ENCODE measurements at regions of chr12 and their contacts with region 1.

Region 1: GRCh38 chr12:46364777-46365580 is 7.6 kb downstream of the SLC38A2 start:
- DNase-seq: no peak
- H3K4me3 ChIP-seq: peak overlapping the region; percentile 2 to 89 (median 58)
- H3K27ac ChIP-seq: peak overlapping the region in 2 of 4 donors; percentile 22 to 95
- H3K4me1 ChIP-seq: peaks cover 59 to 96% (median 94%) of the 10 kb centered on the region in 4 donors
- H3K27me3 ChIP-seq: no peaks in the 10 kb centered on the region
- CTCF ChIP-seq: no peak
- EP300 ChIP-seq: no peak
- POLR2A ChIP-seq: no peak

Region 2: DNA sequence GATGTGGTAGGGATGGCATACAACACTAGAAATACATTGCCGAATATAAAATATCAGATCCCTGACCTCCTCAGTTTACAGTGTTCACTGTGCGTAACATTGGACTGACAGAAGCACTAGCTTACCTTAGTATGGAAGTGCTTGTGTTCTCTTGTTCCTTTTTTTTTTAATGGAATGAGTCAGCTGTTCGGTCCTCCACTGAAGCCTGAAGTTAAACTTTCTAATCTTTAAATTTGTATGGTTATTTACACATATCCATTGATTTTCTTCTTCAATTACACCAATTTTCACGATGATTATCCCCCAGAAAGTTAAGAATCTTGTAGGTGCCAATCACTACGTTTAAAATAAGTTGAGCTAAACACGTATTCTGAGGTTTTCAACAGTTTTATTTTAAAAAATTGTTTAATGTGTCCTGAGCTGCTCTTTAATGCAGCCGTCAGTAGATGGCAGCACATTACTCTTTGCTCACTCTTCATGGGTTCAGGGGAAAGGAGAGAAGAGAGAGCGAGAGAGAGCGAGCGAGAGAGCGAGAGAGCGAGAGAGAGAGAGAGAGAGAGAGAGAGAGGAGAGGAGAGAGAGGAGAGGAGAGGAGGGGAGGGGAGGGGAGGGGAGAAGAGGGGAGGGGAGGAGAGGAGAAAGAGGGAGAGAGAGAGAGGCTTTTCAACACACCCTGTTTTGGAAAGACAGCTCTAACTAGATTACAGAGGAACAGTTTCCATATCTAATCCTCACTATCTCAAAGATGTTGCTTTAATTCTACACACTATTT is 239.9 kb before region 1 on chr12:
- intact Hi-C with region 1: loop called (anchors 10 kb)
- DNase-seq: no peak
- H3K4me3 ChIP-seq: peak overlapping the region; percentile 30 to 51 (median 42)
- H3K27ac ChIP-seq: peak overlapping the region in 3 of 4 donors; percentile 25 to 42 (median 37)
- H3K4me1 ChIP-seq: peaks cover 12 to 21% (median 15%) of the 10 kb centered on the region in 4 donors
- H3K27me3 ChIP-seq: no peaks in the 10 kb centered on the region
- CTCF ChIP-seq: peak; percentile 72 to 80 (median 72)
- EP300 ChIP-seq: no peak
- POLR2A ChIP-seq: no peak

Region 3: DNA sequence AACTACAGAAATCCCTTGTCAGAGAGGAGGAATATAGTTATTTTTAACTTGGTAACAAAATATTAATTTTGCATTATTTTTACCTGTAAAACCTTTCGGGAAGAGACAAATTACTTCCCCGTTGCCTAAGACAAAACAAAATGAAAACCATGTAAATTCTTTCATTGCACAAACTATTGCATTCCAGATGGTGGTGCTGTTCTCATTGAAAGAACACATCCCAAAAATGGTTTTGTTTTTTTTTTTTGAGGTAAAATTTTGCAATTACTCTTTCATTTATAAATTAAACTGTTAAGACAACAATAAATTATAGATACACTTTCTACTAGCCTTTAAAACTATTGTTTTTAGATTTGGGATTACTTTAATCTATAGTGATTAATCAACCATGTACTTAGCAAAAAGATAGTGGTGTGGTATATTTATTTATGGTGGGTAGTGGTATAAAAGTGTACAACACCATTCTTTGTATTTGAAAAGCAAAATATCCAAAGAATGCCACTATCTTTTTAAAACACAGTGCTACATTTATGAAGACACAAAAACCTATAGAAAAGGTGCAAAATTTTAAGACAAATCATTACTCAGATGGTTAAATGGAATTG is 211.6 kb before region 1 on chr12:
- intact Hi-C with region 1: loop called (anchors 5 kb)
- DNase-seq: no peak
- H3K4me3 ChIP-seq: no peak overlapping the region
- H3K27ac ChIP-seq: peak overlapping the region in 2 of 4 donors; percentile 18 to 42
- H3K4me1 ChIP-seq: peaks cover 6 to 47% (median 43%) of the 10 kb centered on the region in 4 donors
- H3K27me3 ChIP-seq: no peaks in the 10 kb centered on the region
- CTCF ChIP-seq: peak; percentile 52 to 72 (median 71)
- EP300 ChIP-seq: no peak
- POLR2A ChIP-seq: no peak

Region 4: DNA sequence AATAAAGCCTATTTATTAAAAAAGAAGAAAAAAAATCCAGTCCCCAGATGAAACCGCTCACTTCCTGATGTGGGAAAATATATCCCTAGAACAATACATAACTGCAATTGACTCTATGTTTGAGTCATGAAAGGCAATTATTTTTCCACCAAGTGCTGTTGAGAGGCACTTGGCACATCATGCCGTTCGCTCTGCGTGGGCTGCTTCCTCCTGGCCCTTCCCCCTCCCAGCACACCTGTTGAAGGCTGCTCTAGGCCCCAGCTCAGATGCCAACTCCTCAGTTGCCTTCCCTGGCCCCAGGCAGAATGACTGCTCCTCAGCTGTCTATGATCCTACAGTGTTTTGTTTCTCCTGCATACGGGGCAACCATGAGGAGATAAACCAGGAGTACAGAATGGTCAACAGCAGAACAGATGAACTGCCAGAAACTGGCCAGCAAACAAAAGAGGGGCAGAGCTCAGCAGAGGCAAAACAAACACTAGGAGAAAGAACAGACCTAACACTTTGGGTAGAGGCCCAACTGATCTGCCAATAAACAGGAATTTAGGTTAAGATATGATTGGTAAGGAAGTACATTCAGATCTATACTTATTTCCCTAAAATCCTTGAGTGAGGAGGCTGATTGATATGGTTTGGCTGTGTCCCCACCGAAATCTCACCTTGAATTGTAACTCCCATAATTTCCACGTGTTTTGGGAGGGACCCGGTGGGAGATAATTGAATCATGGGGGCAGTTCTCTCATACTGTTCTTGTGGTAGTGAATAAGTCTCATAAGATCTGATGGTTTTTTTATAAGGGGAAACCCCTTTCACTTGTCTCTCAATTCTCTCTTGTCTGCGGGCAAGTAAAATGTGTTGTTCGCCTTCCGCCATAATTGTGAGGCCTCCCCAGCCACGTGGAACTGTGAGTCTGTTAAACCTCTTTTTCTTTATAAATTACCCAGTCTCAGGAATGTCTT is 154.8 kb before region 1 on chr12:
- intact Hi-C with region 1: loop called (anchors 5 kb)
- DNase-seq: no peak
- H3K4me3 ChIP-seq: no peak overlapping the region
- H3K27ac ChIP-seq: peak overlapping the region; percentile 73 to 79 (median 77)
- H3K4me1 ChIP-seq: peaks cover 47 to 87% (median 73%) of the 10 kb centered on the region in 4 donors
- H3K27me3 ChIP-seq: no peaks in the 10 kb centered on the region
- CTCF ChIP-seq: no peak
- EP300 ChIP-seq: no peak
- POLR2A ChIP-seq: no peak

Region 5: DNA sequence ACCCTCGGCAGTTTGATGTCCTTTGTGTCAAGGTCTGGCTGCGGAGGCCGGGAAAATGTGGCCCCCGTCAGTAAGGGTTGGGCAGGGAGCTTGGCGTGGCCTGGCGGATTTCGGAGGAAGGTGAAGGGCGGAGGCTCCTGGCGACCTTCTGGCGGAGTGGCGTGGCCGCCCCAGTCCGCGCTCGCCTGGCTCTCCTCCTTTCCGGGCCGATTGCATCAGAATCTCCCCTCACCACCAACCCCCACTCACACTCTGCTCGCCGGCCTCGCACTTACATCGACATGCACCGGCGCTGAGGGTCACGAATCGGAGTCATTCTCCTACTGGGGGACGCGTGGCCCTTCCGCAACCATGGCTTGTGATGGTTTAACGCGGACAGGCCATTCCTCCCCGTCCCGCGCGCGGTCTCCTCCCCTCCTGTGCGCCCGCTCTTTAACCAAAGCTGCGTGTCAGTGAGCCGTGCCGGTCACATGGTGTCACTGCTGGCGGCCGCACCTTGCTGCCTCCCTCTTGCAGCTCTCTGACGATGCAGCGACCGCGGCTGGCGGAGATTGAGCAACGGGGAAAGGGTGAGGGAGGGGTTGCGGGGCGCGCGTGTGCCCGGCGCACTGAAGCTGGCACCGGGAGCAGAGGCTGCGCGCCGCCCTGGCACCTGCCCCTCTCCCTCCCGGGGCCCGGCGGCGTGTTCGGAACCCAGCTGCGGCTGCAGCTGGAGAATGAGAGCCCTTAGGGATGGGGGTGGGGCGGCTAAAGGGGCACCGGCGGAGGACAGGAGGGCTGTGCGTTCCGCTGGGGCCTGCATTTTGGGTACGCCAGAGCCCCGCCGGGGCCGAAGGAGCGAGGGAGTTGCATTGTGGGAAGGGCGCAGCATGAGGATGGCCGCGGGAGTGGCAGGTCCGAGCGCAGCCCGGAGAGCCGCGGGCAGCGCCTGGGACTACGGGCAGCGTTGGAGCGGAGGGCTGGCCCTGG is 96.1 kb before region 1 on chr12 and contains the start of gene SLC38A1:
- intact Hi-C with region 1: loop called (anchors 2 kb)
- DNase-seq: peak; percentile 95
- H3K4me3 ChIP-seq: peak within 1 kb of the TSS; percentile 59 to 86 (median 68)
- H3K27ac ChIP-seq: peak within 1 kb of the TSS; percentile 91 to 94 (median 93)
- H3K4me1 ChIP-seq: peaks cover 19 to 58% (median 43%) of the 10 kb centered on the region in 4 donors
- H3K27me3 ChIP-seq: no peaks in the 10 kb centered on the region
- CTCF ChIP-seq: no peak
- EP300 ChIP-seq: no peak
- POLR2A ChIP-seq: peak; percentile 87
- total RNA-seq, gene SLC38A1: 173 to 200 (median 193) TPM

Region 6: DNA sequence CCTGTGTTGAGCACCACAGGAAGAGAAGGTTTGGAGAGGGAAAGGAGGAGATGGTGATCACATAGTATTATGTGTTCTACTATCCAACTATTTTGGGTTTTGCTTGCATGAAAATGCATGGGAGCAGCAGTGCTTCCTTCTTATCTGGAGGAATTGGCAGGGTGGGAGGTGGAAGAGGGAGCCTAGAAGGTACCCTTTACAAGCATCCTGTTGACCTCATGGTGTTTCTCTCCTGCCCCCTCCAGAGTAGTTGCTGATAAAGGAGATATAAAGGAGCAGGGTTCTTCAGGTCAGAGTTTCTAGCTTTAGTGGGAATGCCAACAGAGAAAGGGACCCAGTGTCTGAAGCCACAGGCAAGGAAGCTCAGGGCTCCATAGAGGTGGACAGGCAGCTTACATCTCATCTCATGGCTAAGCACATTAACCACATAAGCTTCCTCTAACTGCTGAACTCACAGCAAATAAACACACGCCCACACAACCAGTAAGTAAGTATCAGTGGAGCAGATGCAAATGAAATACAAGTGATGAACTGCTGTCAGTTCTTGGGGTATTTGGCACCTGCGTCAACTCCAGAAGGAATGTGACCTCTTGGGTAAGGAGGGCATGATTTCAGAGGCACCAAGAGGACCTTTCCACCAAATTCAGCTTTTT is 181.8 kb after region 1 on chr12:
- intact Hi-C with region 1: no loop called
- DNase-seq: no peak
- H3K4me3 ChIP-seq: no peak overlapping the region
- H3K27ac ChIP-seq: no peak overlapping the region
- H3K4me1 ChIP-seq: peaks cover 2 to 15% (median 13%) of the 10 kb centered on the region in 4 donors
- H3K27me3 ChIP-seq: no peaks in the 10 kb centered on the region
- CTCF ChIP-seq: no peak
- EP300 ChIP-seq: no peak
- POLR2A ChIP-seq: no peak